Endothelial cell of umbilical vein (primary cell): ENCODE measurements at regions of chr7 and their contacts with region 1.

Region 1: GRCh38 chr7:129468087-129468486 is 33.9 kb downstream of the STRIP2 start:
- DNase-seq: no peak
- H3K4me3 ChIP-seq: no peak overlapping the region
- H3K27ac ChIP-seq: no peak overlapping the region
- H3K4me1 ChIP-seq: no peaks in the 10 kb centered on the region
- H3K27me3 ChIP-seq: no peaks in the 10 kb centered on the region
- CTCF ChIP-seq: no peak
- POLR2A ChIP-seq: no peak

Region 2: DNA sequence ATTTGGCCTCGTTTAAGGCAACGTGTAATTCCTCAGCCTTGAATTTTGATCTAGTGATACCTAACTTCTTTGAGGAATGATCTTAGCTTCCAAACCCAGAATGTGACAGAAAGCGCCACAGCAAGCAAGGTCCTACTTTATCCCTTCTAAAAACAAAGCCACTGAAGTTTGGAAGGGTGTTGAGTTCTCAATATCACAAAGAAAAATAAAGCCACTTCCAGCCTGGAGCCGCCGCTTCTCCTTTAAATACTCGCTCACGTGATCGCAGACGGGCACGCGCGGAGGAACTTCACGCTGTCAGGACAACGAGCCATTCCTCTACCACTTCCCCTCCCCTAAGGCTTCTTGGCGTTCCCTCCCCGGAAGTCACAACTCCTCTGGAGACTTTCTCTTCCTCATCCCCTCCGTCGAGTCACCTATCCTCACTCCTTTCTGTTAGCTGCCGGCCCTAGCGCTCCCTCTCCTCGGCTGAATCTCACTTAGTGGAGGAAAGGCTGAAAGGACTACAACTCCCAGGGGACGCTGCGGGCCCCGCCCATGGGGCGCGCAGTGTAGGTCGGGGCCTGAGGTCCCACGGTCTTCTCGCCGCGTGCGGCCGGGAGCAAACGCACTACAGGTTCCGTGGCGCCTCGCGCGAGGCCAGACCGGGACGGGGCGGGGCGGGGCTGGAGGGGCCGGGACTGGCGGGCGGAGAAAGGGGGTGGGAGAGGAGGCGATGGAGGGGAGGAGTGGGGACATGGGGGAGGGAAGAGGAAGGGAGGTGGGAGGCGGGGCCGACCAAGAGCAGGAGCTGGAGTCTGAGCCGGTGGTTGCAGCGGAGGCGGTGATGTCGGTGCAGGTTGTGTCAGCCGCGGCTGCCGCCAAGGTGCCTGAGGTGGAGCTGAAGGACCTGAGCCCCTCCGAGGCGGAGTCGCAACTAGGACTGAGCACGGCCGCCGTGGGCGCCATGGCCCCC is 243.6 kb before region 1 on chr7 and contains the start of gene AHCYL2:
- CTCF ChIA-PET with region 1: interaction called, 67 read pairs
- POLR2A ChIA-PET with region 1: no interaction called
- dilution Hi-C with region 1: no loop called
- intact Hi-C with region 1: loop called (anchors 1 kb)
- DNase-seq: peak; percentile 98
- H3K4me3 ChIP-seq: peak within 1 kb of the TSS; percentile 74 to 94 (median 79)
- H3K27ac ChIP-seq: peak within 1 kb of the TSS; percentile 92
- H3K4me1 ChIP-seq: peaks cover 22% of the 10 kb centered on the region
- H3K27me3 ChIP-seq: no peaks in the 10 kb centered on the region
- CTCF ChIP-seq: no peak
- POLR2A ChIP-seq: no peak
- total RNA-seq, gene AHCYL2: 11.0 and 13.5 TPM in 2 replicates

Region 3: GRCh38 chr7:129343099-129343700 is 124.9 kb before region 1 on chr7:
- CTCF ChIA-PET with region 1: interaction called, 86 read pairs
- POLR2A ChIA-PET with region 1: no interaction called
- dilution Hi-C with region 1: no loop called
- intact Hi-C with region 1: loop called (anchors 1 kb)
- DNase-seq: peak; percentile 68
- H3K4me3 ChIP-seq: no peak overlapping the region
- H3K27ac ChIP-seq: no peak overlapping the region
- H3K4me1 ChIP-seq: no peaks in the 10 kb centered on the region
- H3K27me3 ChIP-seq: no peaks in the 10 kb centered on the region
- CTCF ChIP-seq: peak; percentile 48 to 54
- POLR2A ChIP-seq: no peak

Region 4: GRCh38 chr7:129376076-129376777 is 91.9 kb before region 1 on chr7:
- CTCF ChIA-PET with region 1: interaction called, 321 read pairs
- POLR2A ChIA-PET with region 1: no interaction called
- dilution Hi-C with region 1: no loop called
- intact Hi-C with region 1: no loop called
- DNase-seq: peak; percentile 39
- H3K4me3 ChIP-seq: no peak overlapping the region
- H3K27ac ChIP-seq: no peak overlapping the region
- H3K4me1 ChIP-seq: peaks cover 10% of the 10 kb centered on the region
- H3K27me3 ChIP-seq: no peaks in the 10 kb centered on the region
- CTCF ChIP-seq: peak; percentile 38 to 57
- POLR2A ChIP-seq: no peak

Region 5: GRCh38 chr7:129635300-129636029 is 167.4 kb after region 1 on chr7:
- CTCF ChIA-PET with region 1: interaction called, 7 read pairs
- POLR2A ChIA-PET with region 1: no interaction called
- dilution Hi-C with region 1: no loop called
- intact Hi-C with region 1: loop called (anchors 1 kb)
- DNase-seq: peak; percentile 76
- H3K4me3 ChIP-seq: no peak overlapping the region
- H3K27ac ChIP-seq: no peak overlapping the region
- H3K4me1 ChIP-seq: no peaks in the 10 kb centered on the region
- H3K27me3 ChIP-seq: no peaks in the 10 kb centered on the region
- CTCF ChIP-seq: peak; percentile 68 to 81
- POLR2A ChIP-seq: no peak